GM10248 (cell line): ENCODE measurements at regions of chr14 and their contacts with region 1.

Region 1: GRCh38 chr14:75063407-75064213 is at the start of gene ACYP1:
- DNase-seq: peak; percentile 96
- CTCF ChIP-seq: no peak

Region 2: DNA sequence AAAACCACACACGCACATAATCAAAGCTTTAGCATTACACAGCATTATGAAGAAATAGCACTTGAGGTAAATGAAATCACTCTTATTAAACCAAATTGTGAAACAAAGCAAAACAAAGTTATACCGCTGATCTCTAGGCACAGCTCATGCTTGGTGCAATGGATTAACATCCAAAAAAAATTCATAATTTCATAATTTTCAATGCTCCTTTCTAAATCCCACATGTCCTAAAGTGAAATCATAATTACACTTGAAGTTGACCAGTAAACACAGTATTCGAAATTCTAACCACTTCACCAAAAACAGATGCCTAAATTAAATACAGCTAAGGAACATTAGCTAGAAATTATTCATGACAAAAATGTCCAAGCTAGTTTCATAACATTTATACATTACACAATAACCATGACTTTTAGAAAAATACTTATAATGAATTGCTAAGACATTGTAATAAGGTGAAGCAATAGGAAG is 13.8 kb before region 1 on chr14:
- CTCF ChIA-PET with region 1: interaction called, 10 read pairs
- POLR2A ChIA-PET with region 1: interaction called, 3 read pairs
- DNase-seq: no peak
- CTCF ChIP-seq: no peak

Region 3: GRCh38 chr14:75158843-75159614 is 95.4 kb after region 1 on chr14:
- CTCF ChIA-PET with region 1: no interaction called
- POLR2A ChIA-PET with region 1: no interaction called
- DNase-seq: no peak
- CTCF ChIP-seq: no peak